Dendritic cell treated with granulocyte-macrophage colony-stimulating factor and Interleukin-4, amounts not matched to agents 40 ng/mL and 50 ng/mL, for 4 days (primary cell): ENCODE measurements at regions of chr10 and their contacts with region 1.

Region 1: DNA sequence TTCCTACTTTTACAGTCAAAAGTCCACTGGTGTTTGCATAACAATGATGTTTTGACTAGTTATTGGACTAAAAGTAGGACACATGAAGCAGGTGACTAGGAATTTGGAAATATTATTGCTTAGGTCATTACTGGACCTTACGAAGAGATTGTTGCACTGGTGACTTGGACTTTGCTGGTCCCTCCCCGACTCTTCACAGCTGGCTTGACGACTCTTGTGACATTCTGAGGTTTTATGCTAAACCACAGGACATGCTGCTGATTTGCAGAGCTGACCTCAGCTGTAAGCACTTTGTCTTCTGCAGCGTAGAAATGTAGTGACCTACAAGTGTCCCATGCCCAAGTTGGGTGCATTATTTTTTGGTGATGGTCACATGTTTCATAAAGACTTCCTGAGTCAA is 21.9 kb downstream of the PCBD1 start:
- H3K4me3 Mint-ChIP-seq: no peak overlapping the region
- H3K27ac Mint-ChIP-seq: peak overlapping the region; percentile 80
- H3K4me1 Mint-ChIP-seq: peaks cover 30% of the 10 kb centered on the region
- H3K27me3 Mint-ChIP-seq: no peaks in the 10 kb centered on the region

Region 2: DNA sequence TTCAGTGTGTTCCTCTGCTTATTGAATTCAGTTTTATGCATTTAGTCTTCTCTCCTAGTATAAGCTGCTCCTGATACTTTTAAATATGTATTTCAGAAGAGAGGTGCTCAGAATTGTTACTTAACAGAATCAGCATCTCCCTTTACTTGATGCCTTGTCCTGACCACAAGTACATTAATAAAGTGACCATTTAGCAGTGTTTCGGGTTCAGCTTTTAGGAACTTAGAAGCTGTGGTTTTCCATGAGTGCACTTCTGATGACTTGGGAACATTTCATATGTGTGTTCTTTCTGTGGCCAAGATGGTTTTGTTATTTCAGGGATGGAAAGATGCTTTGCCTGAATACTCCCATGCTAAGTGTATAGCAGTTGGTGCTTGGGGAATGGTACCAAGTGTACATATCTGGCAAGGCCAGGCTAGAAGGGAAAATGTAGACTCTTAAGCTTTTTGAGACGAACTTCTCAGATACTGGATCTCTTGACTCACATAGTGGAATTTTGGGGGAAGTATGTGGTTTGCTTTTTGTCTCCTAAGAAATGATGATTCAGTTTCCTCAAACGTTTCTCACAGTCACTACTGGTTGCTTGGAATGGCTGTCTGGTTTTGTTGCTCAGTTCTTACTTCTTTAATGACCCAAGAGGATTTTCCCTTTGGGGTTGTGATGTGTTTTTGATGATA is 33.4 kb before region 1 on chr10:
- intact Hi-C with region 1: loop called (anchors 2 kb)
- H3K4me3 Mint-ChIP-seq: peak overlapping the region; percentile 68
- H3K27ac Mint-ChIP-seq: peak overlapping the region; percentile 88
- H3K4me1 Mint-ChIP-seq: peaks cover 86% of the 10 kb centered on the region
- H3K27me3 Mint-ChIP-seq: no peaks in the 10 kb centered on the region

Region 3: DNA sequence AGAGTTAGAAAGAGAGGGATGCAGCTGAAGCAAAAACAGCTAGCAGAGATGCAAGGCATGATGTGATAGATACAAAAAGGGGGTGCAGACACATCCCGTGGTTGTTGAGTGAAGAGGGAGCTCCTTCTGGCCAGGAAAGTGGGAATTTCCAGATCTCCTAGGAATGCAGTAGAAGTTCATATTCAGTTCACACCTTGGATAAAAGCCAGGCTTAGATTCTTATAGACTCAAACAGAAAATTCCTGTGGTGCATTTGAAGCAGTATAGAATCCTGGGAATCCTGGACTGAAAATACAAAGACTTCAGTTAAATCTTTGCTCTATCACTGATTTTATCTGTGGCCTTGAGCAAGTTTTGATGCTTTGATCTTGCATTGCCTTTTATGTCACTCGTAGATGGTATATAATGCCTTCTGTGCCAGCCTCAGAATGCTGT is 16.8 kb before region 1 on chr10:
- intact Hi-C with region 1: loop called (anchors 2 kb)
- H3K4me3 Mint-ChIP-seq: no peak overlapping the region
- H3K27ac Mint-ChIP-seq: no peak overlapping the region
- H3K4me1 Mint-ChIP-seq: peaks cover 36% of the 10 kb centered on the region
- H3K27me3 Mint-ChIP-seq: no peaks in the 10 kb centered on the region

Region 4: GRCh38 chr10:71193516-71193915 is 327.1 kb after region 1 on chr10:
- intact Hi-C with region 1: no loop called
- H3K4me3 Mint-ChIP-seq: no peak overlapping the region
- H3K27ac Mint-ChIP-seq: no peak overlapping the region
- H3K4me1 Mint-ChIP-seq: no peaks in the 10 kb centered on the region
- H3K27me3 Mint-ChIP-seq: peaks cover 9% of the 10 kb centered on the region